ENCODE measurements at regions of chr1 and their contacts with region 1.

Region 1: DNA sequence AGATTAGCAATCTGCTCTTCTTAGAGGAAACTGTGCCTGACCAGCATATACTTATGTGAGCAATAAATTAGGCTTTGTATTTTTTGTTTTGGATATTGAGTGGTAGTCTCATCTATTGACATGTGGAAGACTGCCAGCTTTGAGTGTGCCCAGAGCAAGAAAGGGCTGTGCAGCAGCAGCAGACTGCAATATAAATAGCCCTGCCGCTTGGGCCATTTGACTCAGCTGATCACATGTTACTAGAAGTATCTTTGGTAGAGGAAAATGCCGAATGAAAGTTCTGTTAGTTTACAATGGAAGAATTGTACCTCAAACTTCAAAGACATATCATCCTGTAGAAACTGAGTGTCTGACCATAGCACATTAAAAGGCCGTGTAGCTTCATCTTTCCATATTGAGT is 9.1 kb upstream of the PSMB2 start:
- DNase-seq: no peak
- H3K4me3 ChIP-seq: no peak overlapping the region
- H3K27ac ChIP-seq: no peak overlapping the region
- H3K4me1 ChIP-seq: no peaks in the 10 kb centered on the region
- H3K27me3 ChIP-seq: peaks cover 0 to 32% (median 0%) of the 10 kb centered on the region in 4 donors
- CTCF ChIP-seq: no peak
- POLR2A ChIP-seq: no peak

Region 2: GRCh38 chr1:35707601-35708440 is 57.4 kb after region 1 on chr1:
- intact Hi-C with region 1: loop called (anchors 5 kb)
- DNase-seq: no peak
- H3K4me3 ChIP-seq: peak overlapping the region; percentile 23 to 69 (median 44)
- H3K27ac ChIP-seq: no peak overlapping the region
- H3K4me1 ChIP-seq: peaks cover 4 to 19% (median 15%) of the 10 kb centered on the region in 3 donors
- H3K27me3 ChIP-seq: peaks cover 0 to 87% (median 3%) of the 10 kb centered on the region in 4 donors
- CTCF ChIP-seq: no peak
- POLR2A ChIP-seq: no peak

Region 3: GRCh38 chr1:35962952-35963351 is 312.5 kb after region 1 on chr1:
- intact Hi-C with region 1: no loop called
- DNase-seq: no peak
- H3K4me3 ChIP-seq: no peak overlapping the region
- H3K27ac ChIP-seq: no peak overlapping the region
- H3K4me1 ChIP-seq: no peaks in the 10 kb centered on the region
- H3K27me3 ChIP-seq: no peaks in the 10 kb centered on the region
- CTCF ChIP-seq: no peak
- POLR2A ChIP-seq: no peak

Region 4: GRCh38 chr1:36175137-36176095 is 525.0 kb after region 1 on chr1:
- intact Hi-C with region 1: no loop called
- DNase-seq: no peak
- H3K4me3 ChIP-seq: no peak overlapping the region
- H3K27ac ChIP-seq: peak overlapping the region; percentile 18 to 69 (median 52)
- H3K4me1 ChIP-seq: peaks cover 15 to 66% (median 35%) of the 10 kb centered on the region in 3 donors
- H3K27me3 ChIP-seq: no peaks in the 10 kb centered on the region
- CTCF ChIP-seq: no peak
- POLR2A ChIP-seq: no peak